Activated naive CD4-positive, alpha-beta T cell treated with anti-CD3 and anti-CD28 coated beads for 36 hours (primary cell): ENCODE measurements at regions of chr17 and their contacts with region 1.

Region 1: GRCh38 chr17:752002-752619 is at the start of gene GEMIN4:
- DNase-seq: peak; percentile 97
- H3K4me3 Mint-ChIP-seq: peak within 1 kb of the TSS; percentile 93
- H3K27ac Mint-ChIP-seq: peak within 1 kb of the TSS; percentile 91
- H3K4me1 Mint-ChIP-seq: peaks cover 30% of the 10 kb centered on the region
- H3K27me3 Mint-ChIP-seq: no peaks in the 10 kb centered on the region
- total RNA-seq, gene GEMIN4: 29.7 to 29.9 TPM

Region 2: DNA sequence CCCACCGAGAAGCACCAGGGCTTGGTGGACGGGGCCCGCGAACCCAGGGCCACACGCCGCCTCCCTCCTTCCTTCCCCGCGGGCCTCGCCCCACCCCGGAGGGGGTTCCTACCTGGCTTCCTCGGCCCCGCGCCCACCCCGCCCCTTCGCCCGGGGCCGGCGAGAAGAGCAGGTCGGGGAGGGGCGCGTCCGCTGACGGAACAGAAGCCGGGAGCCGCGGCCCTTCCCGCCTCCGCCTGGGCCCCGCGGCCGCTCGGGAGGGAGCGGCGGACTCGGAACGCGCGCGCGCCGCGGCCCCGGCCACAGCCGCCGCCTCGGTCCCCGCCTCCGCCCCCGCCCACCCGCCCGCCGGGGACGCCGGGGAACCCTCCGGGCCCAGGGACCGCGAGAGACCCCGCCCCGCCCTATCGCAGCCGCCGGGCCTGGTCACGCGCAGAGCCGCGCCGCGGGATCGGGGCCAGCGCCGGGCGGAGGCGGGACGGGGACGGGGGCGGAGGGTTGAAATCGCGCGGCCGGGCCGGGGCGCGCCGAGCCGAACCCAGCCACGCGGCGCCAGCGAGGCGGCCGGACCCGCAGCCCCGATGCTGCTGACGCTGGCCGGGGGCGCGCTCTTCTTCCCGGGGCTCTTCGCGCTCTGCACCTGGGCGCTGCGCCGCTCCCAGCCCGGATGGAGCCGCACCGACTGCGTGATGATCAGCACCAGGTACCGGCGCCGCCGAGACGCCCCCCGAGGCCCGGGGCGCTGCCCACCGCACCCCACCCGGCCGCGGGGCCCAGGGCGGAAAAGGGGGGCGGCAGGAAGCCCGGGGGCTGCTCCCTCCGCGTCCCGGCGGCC is 19.8 kb before region 1 on chr17 and contains the start of gene TLCD3A:
- CTCF ChIA-PET with region 1: interaction called, 3 read pairs
- intact Hi-C with region 1: loop called (anchors 2 kb)
- DNase-seq: peak; percentile 53
- H3K4me3 Mint-ChIP-seq: peak within 1 kb of the TSS; percentile 78
- H3K27ac Mint-ChIP-seq: no peak within 1 kb of the TSS
- H3K4me1 Mint-ChIP-seq: peaks cover 14% of the 10 kb centered on the region
- H3K27me3 Mint-ChIP-seq: peaks cover 14% of the 10 kb centered on the region
- total RNA-seq, gene TLCD3A: 2.7 to 3.0 TPM

Region 3: GRCh38 chr17:781805-782731 is 30.0 kb after region 1 on chr17 and contains the starts of genes GLOD4 and MRM3:
- CTCF ChIA-PET with region 1: interaction called, 3 read pairs
- intact Hi-C with region 1: loop called (anchors 1 kb)
- DNase-seq: peak; percentile 95
- H3K4me3 Mint-ChIP-seq: peak within 1 kb of the TSS; percentile 89
- H3K27ac Mint-ChIP-seq: peak within 1 kb of the TSS; percentile 93
- H3K4me1 Mint-ChIP-seq: peaks cover 35% of the 10 kb centered on the region
- H3K27me3 Mint-ChIP-seq: no peaks in the 10 kb centered on the region
- total RNA-seq, gene GLOD4: 61.1 to 63.7 TPM
- total RNA-seq, gene MRM3: 22.8 to 25.6 TPM